ENCODE measurements at regions of chr16 and their contacts with region 1.

Region 1: GRCh38 chr16:89383082-89384003 is 107.0 kb downstream of the ANKRD11 start:
- DNase-seq: peak; percentile 82 to 93
- H3K4me3 ChIP-seq: no peak overlapping the region
- H3K27ac ChIP-seq: peak overlapping the region; percentile 83
- H3K4me1 ChIP-seq: peaks cover 25% of the 10 kb centered on the region
- H3K27me3 ChIP-seq: no peaks in the 10 kb centered on the region
- CTCF ChIP-seq: no peak; the same call in 1 of the 2 replicates

Region 2: GRCh38 chr16:89325861-89326471 is 57.4 kb before region 1 on chr16:
- CTCF ChIA-PET with region 1: no interaction called
- POLR2A ChIA-PET with region 1: interaction called, 7 read pairs
- intact Hi-C with region 1: loop called (anchors 5 kb)
- DNase-seq: peak; percentile 61 to 64
- H3K4me3 ChIP-seq: no peak overlapping the region; the same call in 1 of the 2 replicates
- H3K27ac ChIP-seq: peak overlapping the region; percentile 86
- H3K4me1 ChIP-seq: peaks cover 95% of the 10 kb centered on the region
- H3K27me3 ChIP-seq: no peaks in the 10 kb centered on the region
- CTCF ChIP-seq: no peak

Region 3: DNA sequence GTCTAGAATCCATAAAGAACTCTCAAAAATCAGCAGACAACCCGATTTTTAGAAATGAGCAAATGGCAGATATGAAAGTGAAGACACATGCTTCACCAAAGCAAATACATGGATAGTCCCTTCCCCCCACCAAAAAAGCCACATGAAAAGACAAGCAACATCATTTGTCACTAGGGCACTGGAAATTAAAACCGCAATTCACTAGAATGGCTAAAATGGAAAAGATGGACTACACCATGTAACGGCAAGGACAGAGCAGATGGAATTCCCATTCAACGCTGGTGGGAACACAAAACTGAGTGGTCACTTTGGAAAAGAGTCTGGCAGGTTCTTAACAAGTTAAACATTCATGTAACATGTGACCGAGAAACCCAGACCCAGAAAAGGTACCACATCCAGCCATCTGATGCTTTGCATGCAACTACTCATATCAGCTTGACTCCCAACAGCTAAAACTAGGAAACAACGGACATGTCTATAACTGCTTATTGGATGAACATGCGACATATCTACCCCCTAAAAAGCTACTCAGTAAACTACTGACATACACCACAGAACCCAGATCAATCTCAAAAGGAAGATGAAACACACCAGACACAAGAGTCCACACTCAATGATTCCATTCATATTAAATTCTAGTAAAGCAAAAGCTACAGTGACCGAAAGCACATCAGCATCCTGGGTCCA is 33.3 kb before region 1 on chr16:
- CTCF ChIA-PET with region 1: interaction called, 16 read pairs
- POLR2A ChIA-PET with region 1: no interaction called
- intact Hi-C with region 1: no loop called
- DNase-seq: no peak
- H3K4me3 ChIP-seq: no peak overlapping the region
- H3K27ac ChIP-seq: no peak overlapping the region
- H3K4me1 ChIP-seq: no peaks in the 10 kb centered on the region
- H3K27me3 ChIP-seq: no peaks in the 10 kb centered on the region
- CTCF ChIP-seq: no peak

Region 4: DNA sequence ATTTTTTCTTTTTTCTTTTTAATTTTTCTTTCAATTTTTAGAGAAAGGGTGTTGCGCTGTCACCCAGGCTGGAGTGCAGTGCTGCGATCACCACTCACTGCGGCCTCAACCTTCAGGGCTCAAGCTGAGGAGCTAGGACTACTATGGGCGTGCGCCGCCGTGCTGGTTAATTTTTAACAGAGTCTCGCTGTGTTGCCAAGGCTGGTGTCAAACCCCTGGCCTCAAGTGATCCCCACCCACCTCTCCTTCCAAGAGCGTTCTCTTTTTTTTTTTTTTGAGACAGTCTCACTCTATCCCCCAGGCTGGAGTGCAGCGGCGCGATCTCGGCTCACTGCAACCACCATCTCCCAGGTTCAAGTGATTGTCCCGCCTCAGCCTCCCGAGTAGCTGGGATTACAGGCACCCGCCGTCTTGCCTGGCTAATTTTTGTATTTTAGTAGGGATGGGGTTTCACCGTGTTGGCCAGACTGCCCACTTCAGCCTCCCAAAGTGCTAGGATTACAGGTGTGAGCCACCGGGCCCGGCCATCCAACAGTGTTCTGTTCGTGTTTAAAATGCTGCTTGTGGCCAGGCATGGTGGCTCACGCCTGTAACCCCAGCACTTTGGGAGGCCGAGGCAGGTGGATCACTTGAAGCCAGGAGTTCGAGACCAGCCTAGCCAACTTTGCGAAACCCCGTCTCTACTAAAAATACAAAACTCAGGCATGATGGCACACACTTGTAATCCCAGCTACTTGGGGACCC is 162.7 kb after region 1 on chr16:
- CTCF ChIA-PET with region 1: no interaction called
- POLR2A ChIA-PET with region 1: no interaction called
- intact Hi-C with region 1: no loop called
- DNase-seq: no peak
- H3K4me3 ChIP-seq: no peak overlapping the region
- H3K27ac ChIP-seq: no peak overlapping the region
- H3K4me1 ChIP-seq: no peaks in the 10 kb centered on the region
- H3K27me3 ChIP-seq: no peaks in the 10 kb centered on the region
- CTCF ChIP-seq: no peak

Measured in PC-9 (cell line).